CD8-positive, alpha-beta T cell (primary cell): ENCODE measurements at regions of chr6 and their contacts with region 1.

Region 1: DNA sequence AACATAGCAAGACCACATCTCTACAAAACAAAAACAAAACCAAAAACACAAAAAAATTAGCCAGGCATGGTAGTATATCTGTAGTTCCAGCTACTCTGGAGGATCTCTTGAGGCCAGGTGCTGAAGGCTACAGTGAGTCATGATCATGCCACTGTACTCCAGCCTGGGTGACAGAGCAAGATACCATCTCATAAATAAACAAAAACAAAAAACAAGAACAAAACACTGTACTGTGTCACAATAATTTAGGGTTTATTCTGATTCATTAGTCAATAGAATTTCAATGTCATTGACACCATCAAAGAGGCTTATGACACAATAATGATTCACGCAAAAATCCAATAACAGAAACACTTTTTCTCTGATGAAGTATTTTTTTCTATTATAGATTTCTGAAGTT is 1121.7 kb upstream of the MAP3K7 start:
- DNase-seq: no peak
- ATAC-seq: no peak
- H3K4me3 ChIP-seq: no peak overlapping the region
- H3K4me3 Mint-ChIP-seq: no peak overlapping the region
- H3K27ac ChIP-seq: no peak overlapping the region
- H3K27ac Mint-ChIP-seq: no peak overlapping the region
- H3K4me1 ChIP-seq: no peaks in the 10 kb centered on the region
- H3K4me1 Mint-ChIP-seq: no peaks in the 10 kb centered on the region
- H3K27me3 ChIP-seq: no peaks in the 10 kb centered on the region
- H3K27me3 Mint-ChIP-seq: no peaks in the 10 kb centered on the region
- CTCF ChIP-seq: no peak

Region 2: DNA sequence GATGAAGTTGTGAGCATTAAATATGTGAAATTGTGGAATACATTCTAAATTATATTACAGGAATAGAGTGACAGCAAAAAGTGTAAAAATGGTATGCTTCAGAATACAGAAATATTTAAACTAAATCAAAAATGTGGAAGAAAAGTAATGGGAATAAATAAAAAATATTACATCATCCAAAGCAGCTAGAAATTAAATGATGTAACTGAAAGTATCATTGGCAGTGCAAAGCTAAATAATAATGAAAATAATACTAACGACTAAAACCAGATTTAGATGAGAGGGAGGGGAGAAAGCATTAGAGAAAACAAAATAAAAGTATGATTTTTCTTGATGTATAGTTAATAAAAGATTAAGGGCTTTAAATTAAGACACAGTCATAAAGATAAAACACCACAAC is 606.7 kb after region 1 on chr6:
- CTCF ChIA-PET with region 1: no interaction called
- POLR2A ChIA-PET with region 1: no interaction called
- intact Hi-C with region 1: loop called in 1 of 2 experiments (anchors 5 kb)
- DNase-seq: no peak
- ATAC-seq: no peak
- H3K4me3 ChIP-seq: no peak overlapping the region
- H3K4me3 Mint-ChIP-seq: no peak overlapping the region
- H3K27ac ChIP-seq: no peak overlapping the region
- H3K27ac Mint-ChIP-seq: no peak overlapping the region
- H3K4me1 ChIP-seq: no peaks in the 10 kb centered on the region
- H3K4me1 Mint-ChIP-seq: no peaks in the 10 kb centered on the region
- H3K27me3 ChIP-seq: no peaks in the 10 kb centered on the region
- H3K27me3 Mint-ChIP-seq: no peaks in the 10 kb centered on the region
- CTCF ChIP-seq: no peak